Naive thymus-derived CD8-positive, alpha-beta T cell (primary cell): ENCODE measurements at regions of chr18 and their contacts with region 1.

Region 1: GRCh38 chr18:79405781-79406575 is 10.2 kb downstream of the NFATC1 start:
- DNase-seq: peak; percentile 72 to 97 (median 92)
- ATAC-seq: peak; percentile 78 to 91
- H3K4me3 Mint-ChIP-seq: peak overlapping the region; percentile 71 to 93 (median 82)
- H3K27ac Mint-ChIP-seq: peak overlapping the region; percentile 94 to 99 (median 98)
- H3K4me1 Mint-ChIP-seq: peaks cover 31 to 65% (median 64%) of the 10 kb centered on the region in 4 donors
- H3K27me3 Mint-ChIP-seq: no peaks in the 10 kb centered on the region

Region 2: GRCh38 chr18:79393635-79394533 is 12.1 kb before region 1 on chr18:
- POLR2A ChIA-PET with region 1: interaction called, 26 read pairs
- DNase-seq: peak in 9 of 10 donors; percentile 32 to 80 (median 47)
- ATAC-seq: peak; percentile 20 to 26
- H3K4me3 Mint-ChIP-seq: peak overlapping the region; percentile 76 to 93 (median 88)
- H3K27ac Mint-ChIP-seq: peak overlapping the region; percentile 47 to 92 (median 83)
- H3K4me1 Mint-ChIP-seq: peaks cover 16 to 45% (median 28%) of the 10 kb centered on the region in 4 donors
- H3K27me3 Mint-ChIP-seq: peaks cover 0 to 12% (median 0%) of the 10 kb centered on the region in 5 donors

Region 3: DNA sequence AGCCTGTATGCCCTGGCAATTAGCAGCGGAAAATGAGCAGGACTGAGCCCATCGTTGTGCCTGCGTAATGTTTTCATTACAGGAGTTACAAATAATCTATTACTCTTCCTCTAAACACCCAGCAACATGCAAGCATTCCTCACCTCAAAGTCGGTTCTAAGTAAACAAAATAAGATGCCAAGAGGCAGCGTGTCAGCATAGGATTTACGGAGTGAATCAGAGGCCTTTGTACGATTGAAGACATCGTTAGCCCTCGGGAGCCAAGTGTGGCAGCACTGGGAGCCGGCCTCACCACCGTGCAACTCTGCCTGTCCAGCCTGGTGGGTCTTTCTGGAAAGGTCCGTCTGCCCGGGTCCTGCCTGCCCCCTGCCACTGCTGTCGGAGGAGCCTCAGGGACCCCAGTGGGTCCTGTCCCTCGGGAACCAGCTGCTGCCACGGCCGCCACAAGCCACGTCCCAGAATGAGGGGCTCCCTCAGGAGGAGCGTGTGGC is 193.5 kb after region 1 on chr18:
- POLR2A ChIA-PET with region 1: no interaction called
- DNase-seq: peak in 1 of 10 donors; percentile 50
- ATAC-seq: no peak
- H3K4me3 Mint-ChIP-seq: no peak overlapping the region
- H3K27ac Mint-ChIP-seq: no peak overlapping the region
- H3K4me1 Mint-ChIP-seq: peaks cover 0 to 12% (median 5%) of the 10 kb centered on the region in 4 donors
- H3K27me3 Mint-ChIP-seq: peaks cover 0 to 28% (median 8%) of the 10 kb centered on the region in 5 donors